CD8-positive, alpha-beta T cell (primary cell): ENCODE measurements at regions of chr17 and their contacts with region 1.

Region 1: DNA sequence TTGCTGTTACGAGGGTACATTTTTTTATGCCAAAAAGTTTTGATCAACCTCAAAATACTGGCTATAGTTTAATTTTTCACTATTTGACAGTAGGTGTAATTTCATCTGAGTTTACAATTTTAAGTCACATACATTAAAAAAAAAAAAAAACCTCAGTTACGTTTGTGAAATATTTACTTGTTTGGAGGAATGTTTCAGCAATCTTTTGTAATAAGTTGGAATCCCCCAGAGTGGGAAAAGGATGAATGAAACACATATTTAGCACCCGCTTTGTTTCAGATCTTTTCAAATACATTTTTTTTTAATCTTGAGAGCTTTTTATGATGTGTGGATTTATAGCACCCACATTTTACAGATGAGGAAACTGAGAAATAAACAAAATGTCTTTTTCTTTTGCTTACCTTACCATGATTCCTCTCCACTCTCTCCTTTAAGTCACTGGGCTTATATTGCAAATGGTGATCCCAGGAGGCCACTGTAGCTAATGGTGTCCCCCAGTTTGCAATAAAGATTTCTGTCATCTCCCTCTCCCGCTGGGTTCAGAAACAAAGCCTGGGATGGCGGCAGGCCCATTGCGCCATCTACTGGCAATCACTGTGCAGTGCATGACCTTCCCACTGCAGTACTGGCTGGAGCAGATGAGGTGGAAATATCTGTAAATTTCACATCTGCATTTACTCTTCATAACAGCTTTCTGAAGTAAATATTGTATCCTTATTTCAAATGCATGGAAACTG is 27.7 kb downstream of the TBC1D3B start:
- DNase-seq: peak; percentile 43 to 84 (median 66)
- ATAC-seq: peak; percentile 85
- H3K4me3 ChIP-seq: peak overlapping the region in 1 of 2 experiments; percentile 23
- H3K4me3 Mint-ChIP-seq: peak overlapping the region; percentile 2
- H3K27ac ChIP-seq: no peak overlapping the region
- H3K27ac Mint-ChIP-seq: no peak overlapping the region
- H3K4me1 ChIP-seq: no peaks in the 10 kb centered on the region
- H3K4me1 Mint-ChIP-seq: peaks cover 5% of the 10 kb centered on the region
- H3K27me3 ChIP-seq: no peaks in the 10 kb centered on the region
- H3K27me3 Mint-ChIP-seq: peaks cover 15% of the 10 kb centered on the region
- CTCF ChIP-seq: peak; percentile 100

Region 2: GRCh38 chr17:35947156-35947585 is 201.6 kb before region 1 on chr17:
- CTCF ChIA-PET with region 1: interaction called, 11 read pairs
- POLR2A ChIA-PET with region 1: no interaction called
- intact Hi-C with region 1: loop called in 1 of 2 experiments (anchors 1 kb)
- DNase-seq: peak; percentile 25 to 76 (median 48)
- ATAC-seq: peak; percentile 91
- H3K4me3 ChIP-seq: no peak overlapping the region
- H3K4me3 Mint-ChIP-seq: no peak overlapping the region
- H3K27ac ChIP-seq: no peak overlapping the region
- H3K27ac Mint-ChIP-seq: no peak overlapping the region
- H3K4me1 ChIP-seq: peaks cover 3% of the 10 kb centered on the region
- H3K4me1 Mint-ChIP-seq: peaks cover 9% of the 10 kb centered on the region
- H3K27me3 ChIP-seq: no peaks in the 10 kb centered on the region
- H3K27me3 Mint-ChIP-seq: no peaks in the 10 kb centered on the region
- CTCF ChIP-seq: peak; percentile 72

Region 3: DNA sequence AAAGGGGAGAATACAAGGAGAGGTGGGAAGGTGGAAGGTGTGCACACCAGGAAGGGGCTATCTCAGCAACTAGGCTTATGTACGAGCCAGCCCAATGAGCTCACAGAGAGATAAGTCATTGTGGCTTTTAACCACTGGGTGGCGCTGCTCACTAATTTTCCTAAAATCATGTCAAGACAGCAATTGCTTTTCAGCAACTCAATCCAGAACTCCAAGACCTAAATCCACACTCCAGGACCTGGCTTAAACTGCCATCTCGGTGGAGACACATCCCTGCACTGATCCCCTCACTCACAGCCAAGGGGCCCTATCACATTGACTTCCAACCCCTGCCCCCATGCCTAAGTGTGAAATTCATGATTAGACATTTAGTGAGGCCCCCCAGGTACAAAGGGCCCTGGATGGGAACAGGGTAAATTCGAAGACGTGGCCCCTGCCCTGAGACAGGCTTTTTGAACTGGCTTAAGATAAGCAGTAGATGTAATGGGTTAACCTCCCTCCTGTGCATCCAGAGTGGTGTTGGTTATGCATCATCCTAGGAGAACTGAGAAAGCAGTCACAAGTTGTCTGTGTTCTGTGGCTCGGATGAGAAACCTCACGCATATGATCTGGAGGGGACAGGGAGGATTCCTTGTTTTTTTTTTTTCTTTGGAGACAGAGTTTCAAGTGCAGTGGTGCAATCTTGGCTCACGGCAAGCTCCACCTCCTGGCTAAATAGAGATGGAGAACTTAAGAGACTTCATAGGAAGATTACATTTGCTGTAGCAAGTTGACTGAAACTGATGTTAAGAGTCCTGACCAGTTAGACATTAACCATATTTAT is 179.0 kb before region 1 on chr17:
- CTCF ChIA-PET with region 1: interaction called, 235 read pairs
- POLR2A ChIA-PET with region 1: interaction called, 4 read pairs
- intact Hi-C with region 1: loop called (anchors 1 kb)
- DNase-seq: peak; percentile 49 to 84 (median 74)
- ATAC-seq: peak; percentile 46
- H3K4me3 ChIP-seq: no peak overlapping the region
- H3K4me3 Mint-ChIP-seq: no peak overlapping the region
- H3K27ac ChIP-seq: no peak overlapping the region
- H3K27ac Mint-ChIP-seq: peak overlapping the region; percentile 4
- H3K4me1 ChIP-seq: no peaks in the 10 kb centered on the region
- H3K4me1 Mint-ChIP-seq: no peaks in the 10 kb centered on the region
- H3K27me3 ChIP-seq: no peaks in the 10 kb centered on the region
- H3K27me3 Mint-ChIP-seq: no peaks in the 10 kb centered on the region
- CTCF ChIP-seq: peak; percentile 80

Region 4: GRCh38 chr17:35977509-35977908 is 171.2 kb before region 1 on chr17:
- CTCF ChIA-PET with region 1: interaction called, 235 read pairs
- POLR2A ChIA-PET with region 1: interaction called, 4 read pairs
- intact Hi-C with region 1: loop called in 1 of 2 experiments (anchors 2 kb)
- DNase-seq: no peak
- ATAC-seq: no peak
- H3K4me3 ChIP-seq: no peak overlapping the region
- H3K4me3 Mint-ChIP-seq: no peak overlapping the region
- H3K27ac ChIP-seq: no peak overlapping the region
- H3K27ac Mint-ChIP-seq: no peak overlapping the region
- H3K4me1 ChIP-seq: no peaks in the 10 kb centered on the region
- H3K4me1 Mint-ChIP-seq: peaks cover 2% of the 10 kb centered on the region
- H3K27me3 ChIP-seq: no peaks in the 10 kb centered on the region
- H3K27me3 Mint-ChIP-seq: peaks cover 9% of the 10 kb centered on the region
- CTCF ChIP-seq: no peak

Region 5: DNA sequence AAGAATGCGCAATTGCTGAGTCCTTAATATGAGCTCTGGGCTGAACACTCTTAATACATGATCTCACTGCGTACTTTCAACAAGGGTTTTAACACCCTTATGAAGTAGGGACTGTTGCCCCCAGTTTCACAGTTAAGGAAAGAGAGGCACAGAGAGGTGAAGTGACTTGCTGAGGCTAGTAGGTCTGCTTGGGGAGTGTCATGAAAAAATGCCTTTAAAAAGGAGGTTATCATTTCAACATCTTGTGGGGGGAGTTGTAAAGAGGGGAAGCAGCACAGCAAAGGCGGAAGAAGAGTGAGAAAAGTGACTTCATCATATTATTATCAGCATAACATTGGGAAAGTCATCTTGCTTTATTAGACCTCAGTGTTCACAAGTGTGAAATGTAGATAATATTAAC is 64.2 kb after region 1 on chr17:
- CTCF ChIA-PET with region 1: no interaction called
- POLR2A ChIA-PET with region 1: no interaction called
- intact Hi-C with region 1: no loop called
- DNase-seq: peak in 1 of 9 experiments; percentile 71
- ATAC-seq: peak; percentile 25
- H3K4me3 ChIP-seq: no peak overlapping the region
- H3K4me3 Mint-ChIP-seq: no peak overlapping the region
- H3K27ac ChIP-seq: peak overlapping the region in 1 of 2 experiments; percentile 81
- H3K27ac Mint-ChIP-seq: peak overlapping the region; percentile 63
- H3K4me1 ChIP-seq: peaks cover 6% of the 10 kb centered on the region
- H3K4me1 Mint-ChIP-seq: peaks cover 32% of the 10 kb centered on the region
- H3K27me3 ChIP-seq: no peaks in the 10 kb centered on the region
- H3K27me3 Mint-ChIP-seq: no peaks in the 10 kb centered on the region
- CTCF ChIP-seq: no peak

Region 6: GRCh38 chr17:36510636-36511035 is 361.9 kb after region 1 on chr17:
- CTCF ChIA-PET with region 1: no interaction called
- POLR2A ChIA-PET with region 1: no interaction called
- intact Hi-C with region 1: no loop called
- DNase-seq: no peak
- ATAC-seq: no peak
- H3K4me3 ChIP-seq: no peak overlapping the region
- H3K4me3 Mint-ChIP-seq: no peak overlapping the region
- H3K27ac ChIP-seq: no peak overlapping the region
- H3K27ac Mint-ChIP-seq: no peak overlapping the region
- H3K4me1 ChIP-seq: no peaks in the 10 kb centered on the region
- H3K4me1 Mint-ChIP-seq: no peaks in the 10 kb centered on the region
- H3K27me3 ChIP-seq: no peaks in the 10 kb centered on the region
- H3K27me3 Mint-ChIP-seq: no peaks in the 10 kb centered on the region
- CTCF ChIP-seq: no peak